ENCODE measurements at regions of chr7 and their contacts with region 1.

Region 1: GRCh38 chr7:45136106-45137060 is 21.2 kb upstream of the RAMP3 start:
- DNase-seq: peak in 3 of 5 donors; percentile 46 to 53 (median 51)
- ATAC-seq: peak; percentile 45 to 86 (median 76)
- H3K4me3 ChIP-seq: no peak overlapping the region
- H3K27ac ChIP-seq: no peak overlapping the region
- H3K4me1 ChIP-seq: peaks cover 0 to 3% (median 0%) of the 10 kb centered on the region in 12 donors
- H3K27me3 ChIP-seq: no peaks in the 10 kb centered on the region
- CTCF ChIP-seq: peak; percentile 74 to 93 (median 86)
- POLR2A ChIP-seq: no peak

Region 2: GRCh38 chr7:44581879-44582603 is 554.3 kb before region 1 on chr7 and contains the start of gene TMED4:
- intact Hi-C with region 1: loop called in 6 of 10 experiments (anchors 5 to 10 kb)
- DNase-seq: peak; percentile 100
- ATAC-seq: peak; percentile 98 to 99 (median 98)
- H3K4me3 ChIP-seq: peak within 1 kb of the TSS; percentile 64 to 98 (median 82)
- H3K27ac ChIP-seq: peak within 1 kb of the TSS; percentile 92 to 99 (median 98)
- H3K4me1 ChIP-seq: peaks cover 5 to 29% (median 22%) of the 10 kb centered on the region in 12 donors
- H3K27me3 ChIP-seq: no peaks in the 10 kb centered on the region
- CTCF ChIP-seq: peak in 1 of 12 donors; percentile 11
- POLR2A ChIP-seq: peak in 1 of 2 donors; percentile 80
- total RNA-seq, gene TMED4: 55.4 to 129 (median 68.9) TPM

Region 3: GRCh38 chr7:44587843-44588711 is 548.3 kb before region 1 on chr7:
- intact Hi-C with region 1: loop called in 6 of 10 experiments (anchors 5 to 10 kb)
- DNase-seq: peak in 1 of 5 donors; percentile 53
- ATAC-seq: peak in 3 of 4 donors; percentile 73 to 81 (median 74)
- H3K4me3 ChIP-seq: no peak overlapping the region
- H3K27ac ChIP-seq: no peak overlapping the region
- H3K4me1 ChIP-seq: peaks cover 0 to 8% (median 2%) of the 10 kb centered on the region in 12 donors
- H3K27me3 ChIP-seq: no peaks in the 10 kb centered on the region
- CTCF ChIP-seq: peak; percentile 41 to 74 (median 67)
- POLR2A ChIP-seq: no peak

Region 4: DNA sequence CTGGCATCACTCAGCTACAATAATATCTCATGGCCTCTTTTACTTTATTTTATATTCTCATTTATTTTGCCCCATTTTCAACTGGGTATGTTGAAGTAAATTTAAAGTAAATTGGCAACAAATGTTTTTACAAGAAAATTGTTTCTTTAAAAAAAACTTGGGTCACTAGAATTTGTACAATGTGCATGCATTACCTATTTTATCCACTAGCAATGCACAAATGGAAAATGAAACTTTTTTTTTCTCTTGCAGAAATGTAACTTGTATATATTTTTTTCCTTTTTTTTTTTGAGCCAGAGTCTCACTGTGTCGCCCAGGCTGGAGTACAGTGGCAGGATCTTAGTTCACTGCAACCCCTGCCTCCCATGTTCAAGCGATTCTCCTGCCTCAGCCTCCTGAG is 278.2 kb before region 1 on chr7:
- intact Hi-C with region 1: loop called (anchors 1 to 10 kb)
- DNase-seq: no peak
- ATAC-seq: no peak
- H3K4me3 ChIP-seq: no peak overlapping the region
- H3K27ac ChIP-seq: no peak overlapping the region
- H3K4me1 ChIP-seq: peaks cover 0 to 6% (median 0%) of the 10 kb centered on the region in 12 donors
- H3K27me3 ChIP-seq: no peaks in the 10 kb centered on the region
- CTCF ChIP-seq: peak in 2 of 12 donors; percentile 24 to 40
- POLR2A ChIP-seq: no peak

Region 5: DNA sequence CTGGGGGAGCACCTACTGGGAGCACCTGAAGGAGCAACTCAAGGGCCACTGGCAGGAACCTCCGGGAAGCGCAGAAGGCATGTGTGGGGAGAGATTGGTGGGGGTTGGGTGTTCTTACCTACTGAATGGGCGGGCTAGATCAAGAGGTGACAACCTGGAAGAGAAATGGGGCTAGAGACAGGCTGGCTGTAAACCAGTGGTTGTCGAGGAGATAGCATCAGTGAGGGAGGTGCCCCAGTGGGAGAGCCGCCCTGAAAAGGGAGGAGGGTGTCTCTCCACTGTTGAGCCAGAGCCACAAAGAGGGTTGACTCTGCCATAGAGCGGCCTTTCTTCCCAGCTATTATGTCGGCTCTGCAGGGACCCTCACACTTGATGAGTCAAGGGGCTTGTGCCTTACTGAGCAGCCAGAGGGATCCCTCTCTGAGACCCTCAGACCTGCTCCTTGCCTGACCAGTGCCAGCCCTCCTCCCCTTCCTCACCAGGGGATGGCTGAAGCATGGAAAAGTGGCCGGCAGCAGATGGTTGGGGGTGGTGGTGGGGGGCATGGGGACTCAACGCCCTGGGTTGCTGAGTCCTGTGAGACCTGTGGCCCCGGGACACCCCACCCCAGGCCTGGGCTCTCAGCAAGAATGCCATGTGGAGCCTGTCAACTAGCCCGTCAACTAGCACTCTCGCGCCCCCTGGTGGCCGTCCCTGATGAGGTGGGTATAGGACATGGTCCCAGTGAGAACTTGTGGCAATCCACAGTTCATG is 214.6 kb before region 1 on chr7:
- intact Hi-C with region 1: loop called in 2 of 10 experiments (anchors 5 kb)
- DNase-seq: peak; percentile 84 to 95 (median 88)
- ATAC-seq: peak; percentile 67 to 98 (median 95)
- H3K4me3 ChIP-seq: no peak overlapping the region
- H3K27ac ChIP-seq: no peak overlapping the region
- H3K4me1 ChIP-seq: peaks cover 0 to 5% (median 0%) of the 10 kb centered on the region in 12 donors
- H3K27me3 ChIP-seq: peaks cover 0 to under 1% (median 0%) of the 10 kb centered on the region in 9 donors
- CTCF ChIP-seq: peak; percentile 79 to 96 (median 88)
- POLR2A ChIP-seq: no peak

Region 6: DNA sequence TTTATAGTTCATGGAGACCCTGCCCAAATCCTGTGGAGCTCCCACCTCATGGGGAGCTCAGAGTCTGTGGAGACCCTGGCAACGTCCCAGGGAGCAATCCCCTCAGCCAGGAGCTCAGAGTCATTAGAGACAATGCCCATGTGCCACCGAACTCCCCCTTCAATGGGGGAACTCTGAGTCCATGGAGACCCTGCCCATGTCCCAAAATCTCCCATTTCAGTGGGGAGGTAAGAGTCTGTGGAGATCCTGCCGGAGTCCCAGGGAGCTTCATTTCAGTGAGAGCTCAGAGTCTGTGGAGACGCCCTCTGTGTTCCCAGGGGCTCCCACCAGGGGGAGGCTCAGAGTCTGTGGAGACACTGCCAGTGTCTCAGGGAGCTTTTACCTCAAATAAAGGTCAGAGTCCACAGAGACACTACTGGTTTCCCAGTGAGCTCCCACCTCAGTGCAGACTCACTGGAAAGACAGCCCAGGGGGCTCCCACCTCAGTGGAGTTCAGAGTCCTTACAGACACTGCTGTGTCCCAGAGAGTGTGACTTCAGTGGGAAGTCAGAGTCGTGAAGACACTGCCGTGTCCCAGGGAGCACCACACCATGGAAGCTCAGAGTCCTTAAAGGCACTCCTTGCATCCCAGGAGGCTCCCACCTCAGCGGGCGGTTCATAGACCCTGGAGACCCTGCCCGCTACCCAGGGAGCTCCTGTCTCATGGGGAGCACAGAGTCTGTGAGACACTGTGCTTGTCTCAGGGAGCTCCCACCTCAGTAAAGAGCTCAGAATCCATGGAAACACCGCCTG is 162.6 kb before region 1 on chr7:
- intact Hi-C with region 1: loop called (anchors 1 to 5 kb)
- DNase-seq: peak in 3 of 5 donors; percentile 52 to 60 (median 54)
- ATAC-seq: peak in 3 of 4 donors; percentile 58 to 71 (median 68)
- H3K4me3 ChIP-seq: no peak overlapping the region
- H3K27ac ChIP-seq: no peak overlapping the region
- H3K4me1 ChIP-seq: peaks cover 0 to 28% (median 0%) of the 10 kb centered on the region in 12 donors
- H3K27me3 ChIP-seq: no peaks in the 10 kb centered on the region
- CTCF ChIP-seq: peak; percentile 31 to 66 (median 55)
- POLR2A ChIP-seq: no peak

Region 7: DNA sequence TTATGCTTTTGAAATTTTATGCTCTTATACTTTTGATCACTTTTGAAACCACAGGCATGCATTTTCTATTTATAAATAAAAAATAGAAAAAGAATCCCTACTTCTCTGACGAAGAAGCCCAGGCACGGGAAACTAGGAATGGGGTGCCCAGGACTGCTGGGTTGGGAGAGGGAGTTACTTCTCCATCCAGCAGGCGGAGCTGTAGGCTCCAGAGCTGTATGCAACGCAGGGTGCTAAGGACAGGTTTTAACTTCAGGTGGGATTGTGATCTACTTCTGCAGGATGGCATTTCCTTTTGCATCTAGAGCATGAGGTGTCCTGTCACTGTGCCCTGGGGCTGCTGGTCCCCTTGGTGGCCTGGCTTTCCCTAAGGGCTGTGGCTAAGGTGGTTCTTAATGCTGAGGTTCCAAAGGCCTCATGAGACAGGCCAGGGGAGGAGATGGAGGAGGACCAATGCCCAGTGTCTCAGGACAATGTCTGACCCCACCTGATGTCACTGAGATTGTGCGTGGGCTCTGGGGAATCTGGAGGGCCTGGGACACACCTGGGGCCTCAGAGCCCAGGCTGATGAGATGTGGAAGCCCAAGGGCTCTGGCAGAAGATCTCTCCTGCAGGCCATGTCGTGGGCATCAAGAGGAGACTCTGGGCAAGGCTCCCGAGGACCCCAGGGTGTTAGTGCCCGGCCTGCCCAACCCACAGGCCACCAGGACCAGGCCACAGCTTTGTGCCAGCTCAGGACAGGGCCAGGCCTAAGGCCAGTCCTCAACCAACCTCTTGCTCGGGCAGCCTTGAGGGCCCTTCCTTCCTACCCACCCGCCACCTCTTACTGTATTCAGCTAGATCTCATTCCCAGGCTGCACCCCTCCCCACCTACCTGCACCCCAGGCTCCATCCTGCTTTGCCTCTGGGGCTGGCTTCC is 736.0 kb after region 1 on chr7:
- intact Hi-C with region 1: no loop called
- DNase-seq: no peak
- ATAC-seq: peak in 1 of 4 donors; percentile 23
- H3K4me3 ChIP-seq: no peak overlapping the region
- H3K27ac ChIP-seq: no peak overlapping the region
- H3K4me1 ChIP-seq: no peaks in the 10 kb centered on the region
- H3K27me3 ChIP-seq: peaks cover 0 to 3% (median 0%) of the 10 kb centered on the region in 9 donors
- CTCF ChIP-seq: peak in 7 of 12 donors; percentile 8 to 41 (median 25)
- POLR2A ChIP-seq: no peak

Measured in heart left ventricle (tissue), 16 donors.